ENCODE measurements at regions of chrX and their contacts with region 1.

Region 1: DNA sequence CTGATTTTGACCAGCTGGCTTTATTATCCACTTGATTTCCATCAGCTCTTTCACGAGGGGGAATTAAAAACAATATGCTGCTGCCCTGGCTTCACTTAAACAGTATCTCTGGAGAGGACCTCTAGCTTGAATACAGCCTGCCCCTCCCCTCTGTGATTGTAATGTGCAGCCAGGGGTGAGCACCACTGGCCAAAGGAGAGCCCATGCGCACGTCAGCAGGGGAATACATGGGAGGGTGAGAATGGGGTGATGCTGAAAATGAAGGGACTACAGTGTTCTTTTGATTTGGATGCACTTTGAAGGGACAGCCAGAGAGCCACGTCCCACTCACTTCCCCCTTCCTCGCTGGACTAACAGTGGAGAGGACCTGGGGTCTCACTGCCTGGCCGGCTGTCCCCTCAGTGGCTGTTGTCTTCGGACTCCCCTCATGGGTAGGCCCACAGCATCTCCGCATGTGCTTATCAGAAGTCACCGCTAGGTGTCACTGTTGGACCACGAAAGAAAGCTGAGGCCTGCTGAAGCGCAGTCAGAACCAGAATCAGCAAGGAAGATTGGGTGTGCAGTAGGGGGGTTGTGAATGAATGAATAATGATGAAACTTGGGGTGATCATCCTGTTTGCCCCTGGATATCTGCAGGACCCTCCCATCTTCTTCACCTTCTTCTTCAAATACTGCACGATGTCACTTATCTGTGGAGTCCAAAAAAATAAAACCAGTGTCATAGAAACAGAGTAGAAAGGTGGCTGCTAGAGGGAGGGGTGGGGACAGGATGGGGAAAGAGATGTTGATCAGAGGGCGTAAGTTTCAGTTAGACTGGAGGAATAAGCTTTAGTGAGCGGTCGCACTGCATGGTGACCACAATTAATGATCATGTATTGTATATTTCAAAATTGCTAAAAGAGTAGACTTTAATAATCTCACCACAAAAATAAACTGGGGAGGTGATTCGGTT is 32.8 kb downstream of the CLCN4 start:
- DNase-seq: no peak
- ATAC-seq: peak; percentile 98
- H3K4me3 ChIP-seq: no peak overlapping the region
- H3K27ac ChIP-seq: no peak overlapping the region
- H3K4me1 ChIP-seq: no peaks in the 10 kb centered on the region
- H3K27me3 ChIP-seq: no peaks in the 10 kb centered on the region; a peak in 1 of 4 replicates
- CTCF ChIP-seq: peak; percentile 74 to 94 (median 81)
- EP300 ChIP-seq: no peak
- POLR2A ChIP-seq: no peak
- RAD21 ChIP-seq: peak; percentile 93

Region 2: GRCh38 chrX:10178866-10179463 is 10.6 kb before region 1 on chrX:
- CTCF ChIA-PET with region 1: interaction called, 17 read pairs
- POLR2A ChIA-PET with region 1: no interaction called
- RAD21 ChIA-PET with region 1: interaction called, 3 read pairs
- SMC1A ChIA-PET with region 1: interaction called, 5 read pairs
- in situ Hi-C with region 1: no loop called
- intact Hi-C with region 1: no loop called
- DNase-seq: no peak
- ATAC-seq: no peak
- H3K4me3 ChIP-seq: no peak overlapping the region
- H3K27ac ChIP-seq: no peak overlapping the region
- H3K4me1 ChIP-seq: no peaks in the 10 kb centered on the region
- H3K27me3 ChIP-seq: peaks cover 0 to 2% of the 10 kb centered on the region in 2 experiments; a peak in 2 of 4 replicates
- CTCF ChIP-seq: no peak
- EP300 ChIP-seq: no peak
- POLR2A ChIP-seq: no peak
- RAD21 ChIP-seq: no peak

Region 3: GRCh38 chrX:10240918-10241317 is 51.3 kb after region 1 on chrX:
- CTCF ChIA-PET with region 1: interaction called, 12 read pairs
- POLR2A ChIA-PET with region 1: no interaction called
- RAD21 ChIA-PET with region 1: interaction called, 4 read pairs
- SMC1A ChIA-PET with region 1: interaction called, 5 read pairs
- in situ Hi-C with region 1: no loop called
- intact Hi-C with region 1: no loop called
- DNase-seq: no peak
- ATAC-seq: peak; percentile 77
- H3K4me3 ChIP-seq: no peak overlapping the region
- H3K27ac ChIP-seq: no peak overlapping the region
- H3K4me1 ChIP-seq: no peaks in the 10 kb centered on the region
- H3K27me3 ChIP-seq: no peaks in the 10 kb centered on the region; a peak in 1 of 4 replicates
- CTCF ChIP-seq: no peak
- EP300 ChIP-seq: no peak
- POLR2A ChIP-seq: no peak
- RAD21 ChIP-seq: no peak

Region 4: GRCh38 chrX:10524578-10524977 is 335.0 kb after region 1 on chrX:
- CTCF ChIA-PET with region 1: interaction called, 11 read pairs
- POLR2A ChIA-PET with region 1: no interaction called
- RAD21 ChIA-PET with region 1: no interaction called
- SMC1A ChIA-PET with region 1: no interaction called
- in situ Hi-C with region 1: no loop called
- intact Hi-C with region 1: no loop called
- DNase-seq: no peak
- ATAC-seq: no peak
- H3K4me3 ChIP-seq: no peak overlapping the region
- H3K27ac ChIP-seq: no peak overlapping the region
- H3K4me1 ChIP-seq: no peaks in the 10 kb centered on the region
- H3K27me3 ChIP-seq: no peaks in the 10 kb centered on the region
- CTCF ChIP-seq: no peak
- EP300 ChIP-seq: no peak
- POLR2A ChIP-seq: no peak
- RAD21 ChIP-seq: no peak

Region 5: DNA sequence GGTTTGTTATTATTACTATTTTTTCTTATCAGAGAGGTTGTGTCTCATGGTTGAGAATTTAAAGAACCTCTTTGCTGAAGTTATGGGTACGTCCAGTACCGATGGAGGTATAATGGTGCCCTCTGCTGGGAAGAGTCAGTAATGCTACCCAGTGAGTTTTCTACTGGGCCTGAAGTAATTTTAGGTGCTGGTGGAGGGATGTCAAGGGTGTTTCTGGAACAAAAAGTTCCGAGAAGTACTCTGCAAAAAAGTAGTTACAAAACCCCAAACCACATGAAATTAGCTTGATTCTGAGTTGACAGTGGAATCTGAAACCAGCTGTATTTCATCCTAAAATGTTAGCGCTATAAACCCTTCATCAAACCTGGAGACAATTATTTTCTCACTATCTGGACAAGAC is 533.3 kb after region 1 on chrX:
- CTCF ChIA-PET with region 1: interaction called, 117 read pairs
- POLR2A ChIA-PET with region 1: no interaction called
- RAD21 ChIA-PET with region 1: interaction called, 16 read pairs
- SMC1A ChIA-PET with region 1: interaction called, 41 read pairs
- in situ Hi-C with region 1: loop called (anchors 5 kb)
- intact Hi-C with region 1: loop called (anchors 1 kb)
- DNase-seq: no peak
- ATAC-seq: peak; percentile 82
- H3K4me3 ChIP-seq: no peak overlapping the region
- H3K27ac ChIP-seq: no peak overlapping the region
- H3K4me1 ChIP-seq: no peaks in the 10 kb centered on the region
- H3K27me3 ChIP-seq: peaks cover 0 to 2% of the 10 kb centered on the region in 2 experiments; a peak in 1 of 4 replicates
- CTCF ChIP-seq: peak; percentile 73 to 78 (median 76)
- EP300 ChIP-seq: no peak
- POLR2A ChIP-seq: no peak
- RAD21 ChIP-seq: peak; percentile 74

Region 6: DNA sequence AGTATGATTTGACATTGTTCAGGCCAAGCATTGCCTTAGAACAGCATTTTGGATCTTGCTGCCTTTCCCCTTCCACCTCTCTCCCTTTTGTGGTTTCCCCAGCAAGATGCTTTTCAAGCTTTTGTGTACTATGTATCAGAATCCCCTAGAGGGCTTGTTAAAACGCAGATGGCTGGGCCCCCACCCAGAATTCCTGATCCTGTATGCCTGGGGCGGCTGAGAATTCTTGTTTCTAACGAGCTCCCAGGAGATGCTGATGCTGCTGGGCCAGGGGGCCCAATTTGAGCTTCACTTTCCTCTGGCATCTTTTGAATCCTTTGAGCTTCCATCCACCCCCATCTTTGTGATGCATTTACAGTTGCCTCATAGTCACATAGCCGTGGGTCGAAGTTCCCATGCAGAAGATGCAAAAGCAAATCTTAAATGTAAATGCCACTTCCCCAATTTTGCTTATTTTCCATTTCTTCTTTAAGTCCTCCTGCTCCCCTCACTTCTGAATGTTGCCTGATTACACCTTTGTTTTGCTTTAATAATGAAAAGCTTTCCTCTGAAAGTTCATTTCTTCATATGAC is 940.0 kb after region 1 on chrX:
- CTCF ChIA-PET with region 1: interaction called, 62 read pairs
- POLR2A ChIA-PET with region 1: no interaction called
- RAD21 ChIA-PET with region 1: interaction called, 3 read pairs
- SMC1A ChIA-PET with region 1: interaction called, 23 read pairs
- in situ Hi-C with region 1: loop called (anchors 5 kb)
- intact Hi-C with region 1: no loop called
- DNase-seq: no peak
- ATAC-seq: no peak
- H3K4me3 ChIP-seq: no peak overlapping the region
- H3K27ac ChIP-seq: no peak overlapping the region
- H3K4me1 ChIP-seq: no peaks in the 10 kb centered on the region
- H3K27me3 ChIP-seq: no peaks in the 10 kb centered on the region
- CTCF ChIP-seq: no peak
- EP300 ChIP-seq: no peak
- POLR2A ChIP-seq: no peak
- RAD21 ChIP-seq: no peak